Right ventricle myocardium inferior (tissue), 1 donor: ENCODE measurements at regions of chr6 and their contacts with region 1.

Region 1: GRCh38 chr6:4664117-4664626 is 112.0 kb upstream of the CDYL start:
- DNase-seq: peak; percentile 87
- ATAC-seq: peak; percentile 90

Region 2: GRCh38 chr6:4472969-4473642 is 191.1 kb before region 1 on chr6:
- intact Hi-C with region 1: loop called (anchors 10 kb)
- DNase-seq: no peak
- ATAC-seq: peak; percentile 54